MCF 10A (cell line): ENCODE measurements at regions of chr11 and their contacts with region 1.

Region 1: DNA sequence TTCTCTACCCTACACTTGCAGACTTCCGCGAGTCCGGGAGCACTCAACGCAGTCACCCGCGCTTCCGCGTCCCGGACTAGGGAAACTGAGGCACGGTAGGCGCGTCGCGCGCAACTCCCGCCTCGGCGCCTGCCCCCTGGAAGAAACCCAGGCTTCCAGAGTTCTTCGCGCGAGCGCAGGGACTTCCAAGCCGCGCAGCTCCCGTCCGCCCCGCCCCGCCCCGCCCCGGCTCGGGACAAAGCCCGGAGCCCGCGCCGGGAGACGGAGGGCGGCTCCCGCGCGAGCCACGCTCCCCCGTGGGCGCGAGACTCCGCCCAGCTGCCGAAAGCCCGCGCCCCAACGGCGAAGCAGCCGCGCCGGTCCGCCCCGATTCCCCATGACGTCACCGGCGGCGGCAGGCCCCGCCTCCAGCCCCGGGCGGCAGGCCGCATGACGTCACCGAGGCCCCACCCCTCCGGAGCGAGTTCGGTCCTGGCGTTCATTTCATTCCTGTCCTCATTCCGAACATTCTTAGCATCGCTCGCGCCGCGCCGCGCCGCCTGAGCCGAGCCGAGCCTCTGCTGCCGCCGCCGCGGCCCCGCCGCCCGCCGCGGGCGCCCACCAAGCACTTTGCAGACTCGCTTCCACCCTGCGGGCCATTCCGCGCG is at the start of gene TEAD1:
- DNase-seq: peak; percentile 91
- H3K4me3 Mint-ChIP-seq: peak within 1 kb of the TSS; percentile 90
- H3K27ac Mint-ChIP-seq: peak within 1 kb of the TSS; percentile 92
- H3K4me1 Mint-ChIP-seq: peaks cover 25% of the 10 kb centered on the region
- H3K27me3 Mint-ChIP-seq: no peaks in the 10 kb centered on the region
- CTCF ChIP-seq: no peak
- total RNA-seq, gene TEAD1: 91.0 and 123 TPM in 2 replicates

Region 2: GRCh38 chr11:12377824-12378593 is 296.0 kb before region 1 on chr11:
- CTCF ChIA-PET with region 1: no interaction called
- POLR2A ChIA-PET with region 1: interaction called, 10 read pairs
- intact Hi-C with region 1: no loop called
- DNase-seq: peak; percentile 90
- H3K4me3 Mint-ChIP-seq: peak overlapping the region; percentile 92
- H3K27ac Mint-ChIP-seq: peak overlapping the region; percentile 97
- H3K4me1 Mint-ChIP-seq: peaks cover 7% of the 10 kb centered on the region
- H3K27me3 Mint-ChIP-seq: no peaks in the 10 kb centered on the region
- CTCF ChIP-seq: no peak

Region 3: DNA sequence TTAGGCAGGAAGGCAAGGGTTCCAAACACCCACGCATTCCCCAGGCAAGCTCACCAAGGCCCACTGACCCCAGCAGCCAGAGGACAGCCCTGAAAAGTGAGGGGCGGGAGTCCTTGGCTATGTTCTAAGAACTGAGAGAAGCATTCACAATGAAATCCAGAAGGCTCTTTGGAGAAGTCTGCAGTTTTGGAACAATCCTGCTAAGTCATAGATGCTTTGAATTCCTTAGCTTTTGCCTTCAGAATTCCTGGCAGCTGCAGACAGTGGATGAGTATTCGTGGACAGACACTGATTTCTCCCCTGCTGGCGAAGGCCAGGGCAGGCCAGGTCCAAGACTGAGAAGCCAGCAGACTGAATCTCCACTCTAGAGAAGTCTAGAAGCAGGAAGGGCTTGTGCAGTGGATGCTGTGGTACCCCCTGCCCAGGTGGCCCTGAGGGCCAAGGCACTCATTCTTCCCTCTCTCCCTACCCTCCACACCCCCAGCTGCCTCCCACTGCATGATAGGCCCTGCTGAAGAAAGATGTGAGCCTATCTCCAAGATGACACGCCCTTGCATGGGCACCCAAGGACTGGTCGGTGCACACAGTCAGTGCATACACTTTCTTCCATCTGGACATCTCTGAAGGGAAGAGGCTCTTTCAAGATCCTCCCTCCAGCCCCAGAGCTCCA is 133.0 kb before region 1 on chr11:
- CTCF ChIA-PET with region 1: no interaction called
- POLR2A ChIA-PET with region 1: interaction called, 4 read pairs
- intact Hi-C with region 1: loop called (anchors 5 kb)
- DNase-seq: peak; percentile 48
- H3K4me3 Mint-ChIP-seq: no peak overlapping the region
- H3K27ac Mint-ChIP-seq: no peak overlapping the region
- H3K4me1 Mint-ChIP-seq: peaks cover 58% of the 10 kb centered on the region
- H3K27me3 Mint-ChIP-seq: no peaks in the 10 kb centered on the region
- CTCF ChIP-seq: no peak

Region 4: GRCh38 chr11:12724301-12725046 is 50.4 kb after region 1 on chr11:
- CTCF ChIA-PET with region 1: interaction called, 3 read pairs
- POLR2A ChIA-PET with region 1: interaction called, 46 read pairs
- intact Hi-C with region 1: loop called (anchors 5 kb)
- DNase-seq: peak; percentile 97
- H3K4me3 Mint-ChIP-seq: peak overlapping the region; percentile 63
- H3K27ac Mint-ChIP-seq: peak overlapping the region; percentile 96
- H3K4me1 Mint-ChIP-seq: peaks cover 58% of the 10 kb centered on the region
- H3K27me3 Mint-ChIP-seq: no peaks in the 10 kb centered on the region
- CTCF ChIP-seq: no peak

Region 5: GRCh38 chr11:12777208-12777874 is 103.3 kb after region 1 on chr11:
- CTCF ChIA-PET with region 1: no interaction called
- POLR2A ChIA-PET with region 1: interaction called, 13 read pairs
- intact Hi-C with region 1: loop called (anchors 5 kb)
- DNase-seq: peak; percentile 62
- H3K4me3 Mint-ChIP-seq: no peak overlapping the region
- H3K27ac Mint-ChIP-seq: peak overlapping the region; percentile 90
- H3K4me1 Mint-ChIP-seq: peaks cover 37% of the 10 kb centered on the region
- H3K27me3 Mint-ChIP-seq: no peaks in the 10 kb centered on the region
- CTCF ChIP-seq: no peak

Region 6: GRCh38 chr11:12893787-12894672 is 220.0 kb after region 1 on chr11:
- CTCF ChIA-PET with region 1: interaction called, 11 read pairs
- POLR2A ChIA-PET with region 1: interaction called, 18 read pairs
- intact Hi-C with region 1: no loop called
- DNase-seq: peak; percentile 55
- H3K4me3 Mint-ChIP-seq: no peak overlapping the region
- H3K27ac Mint-ChIP-seq: peak overlapping the region; percentile 85
- H3K4me1 Mint-ChIP-seq: peaks cover 12% of the 10 kb centered on the region
- H3K27me3 Mint-ChIP-seq: no peaks in the 10 kb centered on the region
- CTCF ChIP-seq: peak; percentile 73